ENCODE measurements at regions of chr9 and their contacts with region 1.

Region 1: GRCh38 chr9:89179895-89180667 is 1.5 kb upstream of the SHC3 start:
- DNase-seq: peak; percentile 96
- H3K4me3 ChIP-seq: peak overlapping the region; percentile 39 to 51 (median 46)
- H3K27ac ChIP-seq: peak overlapping the region; percentile 41 to 73 (median 61)
- H3K4me1 ChIP-seq: peaks cover 25 to 48% (median 42%) of the 10 kb centered on the region in 4 donors
- H3K27me3 ChIP-seq: peaks cover 0 to 50% (median 23%) of the 10 kb centered on the region in 4 donors
- CTCF ChIP-seq: no peak
- EP300 ChIP-seq: no peak
- POLR2A ChIP-seq: no peak

Region 2: GRCh38 chr9:88355166-88355565 is 824.9 kb before region 1 on chr9:
- intact Hi-C with region 1: no loop called
- DNase-seq: no peak
- H3K4me3 ChIP-seq: no peak overlapping the region
- H3K27ac ChIP-seq: no peak overlapping the region
- H3K4me1 ChIP-seq: no peaks in the 10 kb centered on the region
- H3K27me3 ChIP-seq: no peaks in the 10 kb centered on the region
- CTCF ChIP-seq: no peak
- EP300 ChIP-seq: no peak
- POLR2A ChIP-seq: no peak

Region 3: DNA sequence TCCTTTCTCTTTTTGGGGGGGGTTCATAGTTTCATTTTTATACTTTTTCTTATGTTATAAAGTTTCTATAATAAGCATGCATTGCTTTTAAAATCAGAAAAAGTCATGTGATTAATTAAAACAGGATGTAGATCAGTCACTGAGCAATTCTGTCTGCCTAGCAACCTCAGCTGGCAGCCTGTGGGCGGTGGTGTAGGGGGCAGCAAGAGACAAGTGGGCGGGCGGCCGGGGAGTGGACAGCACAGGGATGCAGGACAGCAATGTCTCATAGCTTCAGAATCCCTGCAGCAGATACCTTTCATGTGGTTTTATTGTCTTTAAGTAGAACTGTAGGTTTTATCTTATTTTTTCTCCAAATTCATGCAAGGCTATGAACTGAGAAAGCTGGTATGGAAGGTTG is 290.7 kb before region 1 on chr9:
- intact Hi-C with region 1: no loop called
- DNase-seq: no peak
- H3K4me3 ChIP-seq: no peak overlapping the region
- H3K27ac ChIP-seq: no peak overlapping the region
- H3K4me1 ChIP-seq: peaks cover 0 to 8% (median 0%) of the 10 kb centered on the region in 4 donors
- H3K27me3 ChIP-seq: no peaks in the 10 kb centered on the region
- CTCF ChIP-seq: no peak
- EP300 ChIP-seq: no peak
- POLR2A ChIP-seq: no peak

Region 4: DNA sequence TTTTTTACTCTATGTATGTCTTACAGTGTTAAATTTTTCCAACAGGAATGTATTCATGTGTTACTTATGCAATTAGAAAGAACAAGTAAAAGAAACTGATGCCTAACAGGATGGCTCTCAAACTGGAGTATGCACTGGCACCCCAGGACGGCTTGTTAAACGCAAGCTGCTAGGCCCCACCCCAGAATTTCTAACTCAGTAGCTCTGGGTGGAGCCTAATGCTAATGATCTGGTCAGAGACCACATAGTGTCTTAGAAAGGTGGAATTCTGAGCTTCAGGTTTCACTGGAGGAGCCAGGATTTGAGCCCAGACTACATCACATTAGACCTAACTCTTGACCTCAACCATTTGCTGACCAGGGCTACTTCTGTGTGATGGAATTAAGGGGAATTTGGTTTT is 35.8 kb before region 1 on chr9:
- intact Hi-C with region 1: loop called (anchors 5 kb)
- DNase-seq: no peak
- H3K4me3 ChIP-seq: no peak overlapping the region
- H3K27ac ChIP-seq: no peak overlapping the region
- H3K4me1 ChIP-seq: no peaks in the 10 kb centered on the region
- H3K27me3 ChIP-seq: no peaks in the 10 kb centered on the region
- CTCF ChIP-seq: no peak
- EP300 ChIP-seq: no peak
- POLR2A ChIP-seq: no peak

Region 5: GRCh38 chr9:89278997-89279739 is 99.1 kb after region 1 on chr9:
- intact Hi-C with region 1: loop called (anchors 10 kb)
- DNase-seq: no peak
- H3K4me3 ChIP-seq: no peak overlapping the region
- H3K27ac ChIP-seq: no peak overlapping the region
- H3K4me1 ChIP-seq: peaks cover 0 to 12% (median 5%) of the 10 kb centered on the region in 4 donors
- H3K27me3 ChIP-seq: no peaks in the 10 kb centered on the region
- CTCF ChIP-seq: peak; percentile 70 to 80 (median 77)
- EP300 ChIP-seq: no peak
- POLR2A ChIP-seq: no peak

Region 6: DNA sequence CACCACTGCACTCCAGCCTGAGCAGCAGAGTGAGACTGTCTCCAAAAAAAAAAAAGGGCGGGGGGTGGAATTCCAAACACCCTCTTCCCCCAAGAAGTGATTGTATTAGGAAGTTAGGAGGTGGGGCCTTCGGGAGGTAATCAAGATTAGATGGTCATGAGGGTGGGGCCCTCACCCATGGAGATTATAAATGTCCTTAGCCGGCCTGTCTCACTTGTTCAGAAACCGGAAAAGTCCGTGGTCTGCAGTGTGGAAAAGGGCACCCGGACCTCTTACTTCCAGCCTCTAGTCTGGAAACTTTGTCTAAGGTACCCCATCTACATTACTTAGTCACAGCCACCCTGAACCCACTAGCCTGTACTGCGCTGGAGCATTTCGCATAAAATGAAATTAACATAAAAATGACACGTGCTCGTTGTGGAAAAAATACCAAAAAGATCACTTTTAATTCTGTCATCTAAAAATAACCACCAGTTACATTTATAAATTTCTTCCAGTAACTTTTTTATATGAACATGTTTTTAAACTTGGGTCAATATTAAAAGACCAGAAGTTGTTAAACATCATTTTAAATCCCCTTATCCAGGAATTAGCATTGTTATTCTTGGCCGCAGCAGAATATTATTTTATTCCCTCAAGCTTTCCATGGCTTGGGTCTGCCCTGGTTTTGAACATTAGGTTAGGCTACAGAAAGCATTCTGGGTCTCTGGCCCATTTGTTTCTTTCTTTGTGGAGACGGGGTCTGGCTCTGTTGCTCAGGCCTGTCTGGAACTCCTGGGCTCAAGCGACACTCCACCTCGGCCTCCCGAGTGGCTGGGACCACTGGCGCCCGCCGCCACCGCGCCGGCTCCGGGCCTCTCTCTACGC is 129.8 kb after region 1 on chr9:
- intact Hi-C with region 1: loop called (anchors 10 kb)
- DNase-seq: no peak
- H3K4me3 ChIP-seq: peak overlapping the region; percentile 77 to 92 (median 84)
- H3K27ac ChIP-seq: peak overlapping the region; percentile 98 to 100 (median 100)
- H3K4me1 ChIP-seq: peaks cover 19 to 28% (median 27%) of the 10 kb centered on the region in 4 donors
- H3K27me3 ChIP-seq: no peaks in the 10 kb centered on the region
- CTCF ChIP-seq: no peak
- EP300 ChIP-seq: no peak
- POLR2A ChIP-seq: no peak

Region 7: DNA sequence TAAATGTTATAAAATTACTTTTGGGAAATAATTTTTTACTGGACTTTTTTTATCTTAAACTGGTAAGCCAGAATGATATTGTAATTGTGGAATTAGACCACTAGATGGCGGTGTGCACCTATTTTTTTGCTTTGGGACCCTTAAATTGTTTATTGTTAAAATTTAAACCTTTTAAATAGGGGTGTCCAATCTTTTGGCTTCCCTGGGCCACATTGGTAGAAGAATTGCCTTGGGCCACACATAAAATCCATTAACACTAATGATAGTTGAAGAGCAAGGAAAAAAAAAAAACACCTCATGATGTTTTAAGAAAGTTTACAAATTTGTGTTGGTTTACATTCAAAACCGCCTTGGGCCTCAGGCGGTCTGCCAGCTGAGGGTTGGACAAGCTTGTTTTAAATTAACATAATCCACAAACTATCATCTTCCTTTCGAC is 396.3 kb after region 1 on chr9:
- intact Hi-C with region 1: no loop called
- DNase-seq: no peak
- H3K4me3 ChIP-seq: no peak overlapping the region
- H3K27ac ChIP-seq: no peak overlapping the region
- H3K4me1 ChIP-seq: no peaks in the 10 kb centered on the region
- H3K27me3 ChIP-seq: peaks cover 0 to 46% (median 2%) of the 10 kb centered on the region in 4 donors
- CTCF ChIP-seq: peak; percentile 67 to 76 (median 69)
- EP300 ChIP-seq: no peak
- POLR2A ChIP-seq: no peak